ENCODE measurements at regions of chrX and their contacts with region 1.

Region 1: DNA sequence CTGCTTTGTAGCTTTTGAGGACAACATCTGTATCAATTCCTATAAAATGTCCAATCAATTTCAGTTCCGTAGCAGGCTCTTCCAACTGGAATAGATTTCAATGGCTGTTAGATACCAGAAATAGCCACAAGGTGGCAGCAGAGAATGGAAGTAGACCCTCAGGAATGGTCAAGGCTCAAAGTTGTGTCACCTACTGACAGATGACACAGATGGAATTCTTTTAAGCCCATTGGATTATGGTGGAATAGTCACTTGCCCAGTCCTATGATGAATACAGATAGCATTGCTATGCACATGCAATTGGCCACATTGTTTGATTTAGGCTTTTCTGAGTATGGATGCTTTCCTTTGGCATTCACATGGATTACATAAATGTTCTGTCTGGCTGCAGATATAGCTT is 130.4 kb upstream of the RADX start:
- DNase-seq: peak; percentile 41
- ATAC-seq: peak; percentile 82
- H3K4me3 ChIP-seq: no peak overlapping the region
- H3K27ac ChIP-seq: no peak overlapping the region
- H3K4me1 ChIP-seq: no peaks in the 10 kb centered on the region
- H3K27me3 ChIP-seq: peaks cover 2% of the 10 kb centered on the region
- CTCF ChIP-seq: peak; percentile 69
- POLR2A ChIP-seq: no peak
- RAD21 ChIP-seq: peak; percentile 72

Region 2: DNA sequence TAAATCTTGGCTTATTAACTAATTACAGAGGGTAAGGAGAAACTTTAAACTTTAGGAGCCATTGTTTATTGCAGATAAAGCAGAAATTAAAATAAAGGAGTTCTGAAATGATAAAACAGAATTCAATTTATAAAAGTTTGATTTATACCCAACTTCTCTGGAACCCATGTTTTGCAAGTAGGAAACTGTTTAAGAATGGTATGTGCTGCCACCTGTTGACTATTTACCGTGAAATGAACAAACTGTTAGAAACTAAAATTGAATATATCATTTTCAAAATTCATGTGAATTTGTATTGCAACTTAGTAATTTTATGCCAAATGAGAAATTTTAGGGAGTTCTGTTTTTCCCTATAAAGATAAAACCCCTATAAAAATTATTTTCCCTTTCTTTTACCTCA is 310.2 kb after region 1 on chrX:
- CTCF ChIA-PET with region 1: no interaction called
- POLR2A ChIA-PET with region 1: no interaction called
- dilution Hi-C with region 1: no loop called
- in situ Hi-C with region 1: loop called (anchors 25 kb)
- intact Hi-C with region 1: loop called (anchors 1 kb)
- DNase-seq: peak; percentile 14
- ATAC-seq: no peak
- H3K4me3 ChIP-seq: no peak overlapping the region
- H3K27ac ChIP-seq: no peak overlapping the region
- H3K4me1 ChIP-seq: no peaks in the 10 kb centered on the region
- H3K27me3 ChIP-seq: no peaks in the 10 kb centered on the region; the same call in 1 of the 2 replicates
- CTCF ChIP-seq: peak; percentile 42
- POLR2A ChIP-seq: no peak
- RAD21 ChIP-seq: peak; percentile 39

Region 3: GRCh38 chrX:106874075-106874474 is 392.7 kb after region 1 on chrX:
- CTCF ChIA-PET with region 1: no interaction called
- POLR2A ChIA-PET with region 1: no interaction called
- dilution Hi-C with region 1: no loop called
- in situ Hi-C with region 1: no loop called
- intact Hi-C with region 1: loop called (anchors 5 kb)
- DNase-seq: peak; percentile 42
- ATAC-seq: 0 out of 2 replicates have a peak, but pooled peaks have one; percentile 29
- H3K4me3 ChIP-seq: no peak overlapping the region
- H3K27ac ChIP-seq: no peak overlapping the region
- H3K4me1 ChIP-seq: no peaks in the 10 kb centered on the region
- H3K27me3 ChIP-seq: peaks cover 3% of the 10 kb centered on the region; the same call in 1 of the 2 replicates
- CTCF ChIP-seq: peak; percentile 63
- POLR2A ChIP-seq: no peak
- RAD21 ChIP-seq: peak; percentile 55